ENCODE measurements at regions of chr10 and their contacts with region 1.

Region 1: DNA sequence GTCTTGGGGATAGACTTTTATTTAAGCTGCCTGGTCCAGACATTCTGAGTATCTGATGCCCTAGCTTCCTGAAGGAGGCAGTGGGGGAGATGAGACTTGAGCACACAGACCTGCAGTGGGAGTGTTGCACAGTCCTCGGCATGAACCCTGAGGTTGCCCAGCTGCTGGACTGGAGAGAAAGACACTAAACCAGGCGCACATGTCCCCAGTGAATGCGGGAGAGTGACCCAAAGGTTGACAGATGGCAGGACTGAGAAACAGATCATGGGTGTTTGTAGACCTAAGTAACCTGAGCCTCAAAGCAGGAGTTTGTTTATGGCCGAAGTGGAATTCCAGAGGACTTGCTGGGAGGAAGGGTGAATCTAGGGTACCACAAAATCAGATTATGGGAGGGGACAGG is 15.7 kb upstream of the MSRB2 start:
- DNase-seq: no peak
- ATAC-seq: no peak
- H3K4me3 ChIP-seq: no peak overlapping the region
- H3K27ac ChIP-seq: no peak overlapping the region
- H3K4me1 ChIP-seq: peaks cover 10% of the 10 kb centered on the region
- H3K27me3 ChIP-seq: no peaks in the 10 kb centered on the region
- CTCF ChIP-seq: no peak

Region 2: GRCh38 chr10:23918839-23919238 is 839.1 kb after region 1 on chr10:
- CTCF ChIA-PET with region 1: interaction called, 10 read pairs
- POLR2A ChIA-PET with region 1: no interaction called
- intact Hi-C with region 1: no loop called
- DNase-seq: no peak
- ATAC-seq: no peak
- H3K4me3 ChIP-seq: no peak overlapping the region
- H3K27ac ChIP-seq: no peak overlapping the region
- H3K4me1 ChIP-seq: no peaks in the 10 kb centered on the region
- H3K27me3 ChIP-seq: no peaks in the 10 kb centered on the region
- CTCF ChIP-seq: no peak